Posterior cingulate gyrus (tissue), 11 donors: ENCODE measurements at regions of chr18 and their contacts with region 1.

Region 1: GRCh38 chr18:1530650-1531049 is 626.0 kb downstream of the ADCYAP1 start:
- DNase-seq: no peak

Region 2: GRCh38 chr18:1483385-1483784 is 47.3 kb before region 1 on chr18:
- intact Hi-C with region 1: loop called (anchors 2 kb)
- DNase-seq: no peak